ENCODE measurements at regions of chr7 and their contacts with region 1.

Region 1: GRCh38 chr7:72785166-72785955 is 42.6 kb downstream of the TYW1B start:
- DNase-seq: peak; percentile 6
- ATAC-seq: no peak
- H3K4me3 ChIP-seq: no peak overlapping the region
- H3K27ac ChIP-seq: no peak overlapping the region
- H3K4me1 ChIP-seq: peaks cover 9% of the 10 kb centered on the region
- H3K27me3 ChIP-seq: no peaks in the 10 kb centered on the region
- CTCF ChIP-seq: no peak

Region 2: DNA sequence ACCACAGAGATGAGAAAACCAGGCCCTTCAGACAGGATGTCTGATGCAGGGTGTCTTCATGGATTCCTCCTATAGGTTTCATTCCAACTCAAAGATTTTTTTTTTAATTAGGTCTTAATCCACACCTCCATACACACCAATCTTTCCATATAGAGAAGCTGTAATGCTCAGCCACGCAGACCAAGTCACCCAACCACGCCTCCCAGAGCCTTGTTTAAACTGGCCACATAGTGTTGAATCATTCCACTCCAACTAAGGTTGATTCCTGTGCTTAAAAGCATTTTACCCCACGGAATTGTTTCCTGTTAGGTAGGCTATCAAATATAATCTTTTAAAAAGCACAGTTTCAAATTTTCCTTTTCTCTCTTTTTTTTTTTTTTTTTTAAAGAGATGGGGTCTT is 111.0 kb before region 1 on chr7:
- CTCF ChIA-PET with region 1: no interaction called
- POLR2A ChIA-PET with region 1: no interaction called
- intact Hi-C with region 1: loop called (anchors 5 kb)
- DNase-seq: peak; percentile 48
- ATAC-seq: peak; percentile 84
- H3K4me3 ChIP-seq: no peak overlapping the region
- H3K27ac ChIP-seq: no peak overlapping the region
- H3K4me1 ChIP-seq: peaks cover 7% of the 10 kb centered on the region; the same call in 1 of the 2 replicates
- H3K27me3 ChIP-seq: no peaks in the 10 kb centered on the region
- CTCF ChIP-seq: no peak

Measured in PC-3 (cell line).